Heart left ventricle (tissue), 16 donors: ENCODE measurements at regions of chr3 and their contacts with region 1.

Region 1: DNA sequence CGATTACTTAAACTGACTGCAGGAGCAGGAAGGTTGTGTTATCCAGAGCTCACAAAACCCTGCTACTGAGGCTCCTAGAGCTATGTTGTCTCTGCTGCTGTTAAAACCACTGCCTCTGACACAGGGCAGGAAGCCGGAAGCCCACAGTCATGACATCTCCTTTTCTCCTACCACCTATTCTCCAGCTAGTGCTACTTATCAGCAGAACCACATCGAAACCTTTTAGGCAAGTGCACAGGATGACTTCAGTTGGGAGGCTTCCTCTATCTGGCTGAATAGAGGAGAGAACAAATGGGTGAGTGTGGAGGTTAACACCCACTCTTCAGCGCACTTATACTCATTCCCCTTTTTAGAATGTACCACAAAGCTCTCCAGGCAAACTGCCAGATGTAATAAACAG is 638.0 kb downstream of the OTOL1 start:
- DNase-seq: no peak
- ATAC-seq: no peak
- H3K4me3 ChIP-seq: no peak overlapping the region
- H3K27ac ChIP-seq: no peak overlapping the region
- H3K4me1 ChIP-seq: peaks cover 0 to 3% (median 0%) of the 10 kb centered on the region in 12 donors
- H3K27me3 ChIP-seq: no peaks in the 10 kb centered on the region
- CTCF ChIP-seq: no peak
- POLR2A ChIP-seq: no peak

Region 2: GRCh38 chr3:161371430-161372326 is 762.9 kb before region 1 on chr3 and contains the start of gene SPTSSB:
- intact Hi-C with region 1: no loop called
- DNase-seq: peak; percentile 20 to 59 (median 23)
- ATAC-seq: peak in 3 of 4 donors; percentile 36 to 81 (median 68)
- H3K4me3 ChIP-seq: peak within 1 kb of the TSS; percentile 27 to 72 (median 56)
- H3K27ac ChIP-seq: peak within 1 kb of the TSS in 1 of 12 donors; percentile 16
- H3K4me1 ChIP-seq: peaks cover 0 to 21% (median 6%) of the 10 kb centered on the region in 12 donors
- H3K27me3 ChIP-seq: peaks cover 0 to 43% (median 12%) of the 10 kb centered on the region in 9 donors
- CTCF ChIP-seq: peak in 2 of 12 donors; percentile 11 to 18
- POLR2A ChIP-seq: no peak
- total RNA-seq, gene SPTSSB: 0.09 to 0.58 (median 0.25) TPM in 5 of 9 donors, not detected in the others

Region 3: DNA sequence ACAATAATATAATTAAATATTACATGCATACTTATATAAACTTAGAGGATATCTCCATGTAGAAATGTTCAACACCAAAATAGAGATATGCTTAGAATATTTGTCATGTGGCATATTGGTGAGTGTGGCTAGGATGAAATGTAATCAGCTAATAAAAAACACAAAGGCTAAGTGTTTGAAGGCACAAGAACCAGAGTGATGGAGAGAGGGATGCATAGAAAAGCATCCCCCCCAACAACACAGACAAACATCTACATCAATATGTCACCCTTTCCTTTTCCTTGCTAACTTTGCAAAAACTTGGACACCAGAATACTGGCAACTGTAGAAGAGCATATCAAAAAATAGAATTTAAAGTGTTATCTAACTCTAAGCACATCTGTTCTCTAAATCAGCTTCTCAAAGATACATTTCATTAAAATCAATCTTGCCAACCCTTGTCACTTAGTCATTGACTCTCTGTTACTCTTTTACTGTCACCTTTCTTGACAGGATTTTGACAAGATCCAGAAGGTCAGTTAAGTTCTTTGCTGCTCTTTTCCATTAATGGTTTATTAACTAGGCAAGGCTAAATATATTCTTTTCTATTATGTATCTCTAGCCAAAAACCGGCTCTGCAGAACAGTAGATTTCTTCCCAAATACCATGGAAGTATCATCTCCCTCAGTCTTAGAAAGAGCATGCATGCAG is 57.9 kb after region 1 on chr3:
- intact Hi-C with region 1: loop called in 1 of 10 experiments (anchors 10 kb)
- DNase-seq: no peak
- ATAC-seq: peak in 1 of 4 donors; percentile 74
- H3K4me3 ChIP-seq: no peak overlapping the region
- H3K27ac ChIP-seq: no peak overlapping the region
- H3K4me1 ChIP-seq: peaks cover 0 to 9% (median 0%) of the 10 kb centered on the region in 12 donors
- H3K27me3 ChIP-seq: no peaks in the 10 kb centered on the region
- CTCF ChIP-seq: no peak
- POLR2A ChIP-seq: no peak